Naive thymus-derived CD4-positive, alpha-beta T cell (primary cell): ENCODE measurements at regions of chr12 and their contacts with region 1.

Region 1: DNA sequence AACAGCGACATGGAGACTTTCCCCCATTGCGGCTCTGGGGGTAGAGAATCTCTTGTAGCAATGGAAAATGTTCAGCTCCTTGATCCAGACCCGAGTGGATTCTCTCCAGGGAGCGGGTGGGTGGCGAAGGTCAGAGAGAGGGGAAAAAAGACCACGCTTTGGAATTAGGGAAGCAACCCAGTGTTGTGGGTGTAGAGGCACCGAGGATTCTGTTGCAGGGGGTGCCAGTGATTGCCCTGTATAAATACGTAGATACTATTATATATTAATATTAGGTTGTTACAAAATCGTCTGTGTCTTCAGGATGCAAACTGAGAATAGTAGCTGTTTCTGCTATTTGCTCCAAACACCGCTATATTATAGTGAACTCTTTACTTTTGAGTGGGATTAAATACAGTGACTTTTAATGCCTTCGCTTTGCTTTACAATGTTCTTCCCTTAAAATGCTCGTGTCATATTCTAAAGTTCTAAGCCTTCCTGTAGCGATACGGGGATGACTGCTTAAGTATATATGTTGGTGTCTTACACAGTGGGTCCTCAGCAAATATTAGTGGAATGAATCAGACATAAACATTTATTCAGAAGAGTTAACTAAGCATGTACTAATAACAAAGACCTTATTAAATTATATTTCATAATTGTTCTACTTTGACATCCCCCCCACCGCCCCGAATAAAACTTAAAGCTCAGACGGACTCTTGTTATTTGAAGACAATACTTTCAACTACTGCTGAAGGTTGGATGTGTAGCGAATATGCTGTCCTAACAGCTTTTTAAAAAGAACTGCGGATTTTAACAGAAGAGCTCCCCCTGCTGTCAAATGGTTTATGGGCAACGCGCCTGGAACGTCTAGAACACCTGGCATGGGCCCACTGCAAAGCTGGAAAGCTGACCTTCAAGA is 136.4 kb upstream of the KRAS start:
- DNase-seq: peak; percentile 48 to 86 (median 83)
- ATAC-seq: peak; percentile 18
- H3K4me3 ChIP-seq: peak overlapping the region; percentile 97
- H3K4me3 Mint-ChIP-seq: peak overlapping the region; percentile 90 to 100 (median 96)
- H3K27ac ChIP-seq: peak overlapping the region; percentile 98
- H3K27ac Mint-ChIP-seq: peak overlapping the region; percentile 91 to 100 (median 100)
- H3K4me1 ChIP-seq: peaks cover 19 to 24% of the 10 kb centered on the region in 2 donors
- H3K4me1 Mint-ChIP-seq: peaks cover 13 to 61% (median 35%) of the 10 kb centered on the region in 7 donors
- H3K27me3 ChIP-seq: no peaks in the 10 kb centered on the region
- H3K27me3 Mint-ChIP-seq: peaks cover 0 to 2% (median 0%) of the 10 kb centered on the region in 5 donors

Region 2: GRCh38 chr12:24991209-24992049 is 395.7 kb before region 1 on chr12:
- CTCF ChIA-PET with region 1: no interaction called
- POLR2A ChIA-PET with region 1: interaction called, 3 read pairs
- intact Hi-C with region 1: loop called (anchors 1 to 2 kb)
- DNase-seq: peak in 7 of 9 donors; percentile 53 to 75 (median 64)
- ATAC-seq: peak; percentile 97
- H3K4me3 ChIP-seq: no peak overlapping the region
- H3K4me3 Mint-ChIP-seq: no peak overlapping the region
- H3K27ac ChIP-seq: no peak overlapping the region
- H3K27ac Mint-ChIP-seq: no peak overlapping the region
- H3K4me1 ChIP-seq: no peaks in the 10 kb centered on the region
- H3K4me1 Mint-ChIP-seq: peaks cover 0 to 2% (median 0%) of the 10 kb centered on the region in 7 donors
- H3K27me3 ChIP-seq: no peaks in the 10 kb centered on the region
- H3K27me3 Mint-ChIP-seq: peaks cover 0 to 7% (median 6%) of the 10 kb centered on the region in 5 donors

Region 3: GRCh38 chr12:25151476-25151875 is 235.6 kb before region 1 on chr12:
- CTCF ChIA-PET with region 1: interaction called, 5 read pairs
- POLR2A ChIA-PET with region 1: no interaction called
- intact Hi-C with region 1: loop called in 1 of 2 experiments (anchors 1 kb)
- DNase-seq: no peak
- ATAC-seq: no peak
- H3K4me3 ChIP-seq: no peak overlapping the region
- H3K4me3 Mint-ChIP-seq: no peak overlapping the region
- H3K27ac ChIP-seq: no peak overlapping the region
- H3K27ac Mint-ChIP-seq: peak overlapping the region in 1 of 9 donors; percentile 0
- H3K4me1 ChIP-seq: no peaks in the 10 kb centered on the region
- H3K4me1 Mint-ChIP-seq: peaks cover 0 to 7% (median 6%) of the 10 kb centered on the region in 7 donors
- H3K27me3 ChIP-seq: no peaks in the 10 kb centered on the region
- H3K27me3 Mint-ChIP-seq: peaks cover 0 to 3% (median 0%) of the 10 kb centered on the region in 5 donors

Region 4: GRCh38 chr12:25208554-25208953 is 178.5 kb before region 1 on chr12:
- CTCF ChIA-PET with region 1: interaction called, 5 read pairs
- POLR2A ChIA-PET with region 1: interaction called, 4 read pairs
- intact Hi-C with region 1: loop called (anchors 1 kb)
- DNase-seq: no peak
- ATAC-seq: no peak
- H3K4me3 ChIP-seq: no peak overlapping the region
- H3K4me3 Mint-ChIP-seq: no peak overlapping the region
- H3K27ac ChIP-seq: no peak overlapping the region
- H3K27ac Mint-ChIP-seq: peak overlapping the region in 1 of 9 donors; percentile 78
- H3K4me1 ChIP-seq: no peaks in the 10 kb centered on the region
- H3K4me1 Mint-ChIP-seq: peaks cover 0 to 30% (median under 1%) of the 10 kb centered on the region in 7 donors
- H3K27me3 ChIP-seq: no peaks in the 10 kb centered on the region
- H3K27me3 Mint-ChIP-seq: no peaks in the 10 kb centered on the region

Region 5: DNA sequence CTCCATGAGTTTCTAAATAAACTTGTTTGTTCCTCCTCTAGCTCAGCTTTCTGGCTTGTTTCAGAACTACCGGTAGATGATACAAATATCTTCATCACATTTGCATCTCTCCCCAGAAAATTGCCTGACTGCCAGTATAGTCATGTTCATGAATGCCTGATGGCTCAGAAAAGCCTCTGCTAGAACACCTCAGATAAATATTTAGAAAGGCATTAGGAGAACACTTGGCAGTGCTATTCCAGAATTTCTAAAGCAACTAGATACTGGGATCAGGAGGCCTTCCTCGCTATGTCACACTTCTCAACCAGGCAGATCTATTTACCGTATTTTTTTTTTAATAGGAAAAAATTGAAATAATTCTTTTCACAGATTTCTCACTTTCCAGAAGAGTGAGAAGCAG is 104.1 kb before region 1 on chr12:
- CTCF ChIA-PET with region 1: interaction called, 5 read pairs
- POLR2A ChIA-PET with region 1: interaction called, 3 read pairs
- intact Hi-C with region 1: loop called in 1 of 2 experiments (anchors 1 kb)
- DNase-seq: no peak
- ATAC-seq: no peak
- H3K4me3 ChIP-seq: no peak overlapping the region
- H3K4me3 Mint-ChIP-seq: peak overlapping the region in 7 of 10 donors; percentile 19 to 70 (median 53)
- H3K27ac ChIP-seq: peak overlapping the region; percentile 41
- H3K27ac Mint-ChIP-seq: peak overlapping the region in 7 of 9 donors; percentile 73 to 92 (median 81)
- H3K4me1 ChIP-seq: peaks cover 22 to 48% of the 10 kb centered on the region in 2 donors
- H3K4me1 Mint-ChIP-seq: peaks cover 12 to 66% (median 57%) of the 10 kb centered on the region in 7 donors
- H3K27me3 ChIP-seq: no peaks in the 10 kb centered on the region
- H3K27me3 Mint-ChIP-seq: peaks cover 0 to 3% (median 0%) of the 10 kb centered on the region in 5 donors